ENCODE measurements at regions of chr13 and their contacts with region 1.

Region 1: DNA sequence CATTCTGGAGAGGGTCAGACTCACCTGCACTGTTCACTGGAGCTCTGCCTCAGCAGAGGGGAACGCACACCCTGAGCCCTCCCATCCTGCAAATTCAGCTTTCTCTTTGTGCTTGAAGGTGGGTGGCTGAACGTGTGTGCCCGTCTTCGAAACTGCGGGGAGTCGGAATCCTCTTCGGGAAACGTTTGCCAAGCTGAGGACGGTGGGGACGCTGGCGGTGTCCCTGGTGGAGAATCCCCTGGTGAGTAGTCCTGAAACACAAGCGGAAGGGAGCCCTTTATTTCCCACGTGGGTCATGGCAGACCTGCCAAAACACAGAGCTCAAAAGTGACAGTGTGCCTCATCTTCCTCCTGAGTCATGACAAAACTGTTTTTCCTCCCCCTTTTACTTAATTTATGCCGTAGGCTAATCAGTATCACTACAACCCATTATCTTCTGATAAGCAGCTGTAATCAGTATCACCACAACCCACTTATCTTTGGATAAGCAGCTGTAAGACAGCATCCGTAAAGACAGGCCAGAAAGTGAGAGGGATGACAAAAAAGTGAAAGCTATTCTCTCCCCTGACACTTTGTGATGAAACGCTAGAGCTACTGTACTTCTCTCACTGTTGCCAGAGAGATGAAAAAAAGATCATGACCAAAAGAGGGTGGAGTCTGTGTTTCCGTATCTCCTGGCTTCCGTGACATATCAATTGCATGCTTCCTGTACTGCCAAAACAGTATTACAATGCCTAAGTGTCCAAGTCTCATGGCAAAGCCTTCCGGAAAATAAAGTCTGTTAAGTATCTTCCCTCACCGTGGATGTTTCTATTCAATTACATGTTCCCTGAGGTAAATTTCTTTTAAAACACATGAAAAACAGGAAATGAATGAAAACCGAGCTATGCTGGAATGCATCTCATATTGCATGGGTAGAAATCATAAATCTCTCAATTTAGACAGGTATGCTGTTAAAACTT is 155.5 kb downstream of the TBC1D4 start:
- DNase-seq: peak; percentile 53
- H3K4me3 Mint-ChIP-seq: peak overlapping the region; percentile 83
- H3K27ac Mint-ChIP-seq: peak overlapping the region; percentile 87
- H3K4me1 Mint-ChIP-seq: peaks cover 40% of the 10 kb centered on the region
- H3K27me3 Mint-ChIP-seq: peaks cover 11% of the 10 kb centered on the region

Region 2: DNA sequence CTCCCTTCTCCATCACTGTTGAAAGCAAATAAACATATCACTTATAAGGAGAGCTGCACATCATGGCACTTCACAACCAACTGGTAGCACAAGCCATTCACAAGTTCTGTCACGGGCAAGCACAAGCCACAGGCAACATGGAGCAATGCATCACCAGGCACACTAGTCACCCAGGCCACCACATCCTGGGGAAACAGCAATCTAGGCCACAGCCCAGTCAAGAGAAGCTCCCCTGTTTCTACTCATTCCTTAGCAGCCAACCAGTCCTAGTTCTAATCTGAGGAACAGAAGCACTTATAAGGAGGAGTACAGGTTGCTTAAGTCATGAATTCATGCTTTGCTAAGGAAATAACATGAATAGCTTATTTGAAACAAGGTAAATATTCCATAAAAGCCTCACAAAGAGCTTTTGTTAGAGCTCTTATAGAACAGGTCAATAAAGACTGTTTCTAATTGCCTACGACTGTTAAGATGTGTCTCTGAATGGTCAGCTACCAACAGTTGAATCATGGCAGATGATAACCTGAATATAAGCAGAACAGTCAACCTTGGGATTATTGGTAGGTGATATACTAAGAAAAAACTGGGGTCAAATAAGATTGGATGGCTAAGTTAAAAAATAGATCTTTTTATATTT is 13.5 kb before region 1 on chr13:
- CTCF ChIA-PET with region 1: interaction called, 8 read pairs
- POLR2A ChIA-PET with region 1: interaction called, 39 read pairs
- DNase-seq: peak; percentile 72
- H3K4me3 Mint-ChIP-seq: no peak overlapping the region
- H3K27ac Mint-ChIP-seq: peak overlapping the region; percentile 44
- H3K4me1 Mint-ChIP-seq: peaks cover 30% of the 10 kb centered on the region
- H3K27me3 Mint-ChIP-seq: no peaks in the 10 kb centered on the region

Region 3: DNA sequence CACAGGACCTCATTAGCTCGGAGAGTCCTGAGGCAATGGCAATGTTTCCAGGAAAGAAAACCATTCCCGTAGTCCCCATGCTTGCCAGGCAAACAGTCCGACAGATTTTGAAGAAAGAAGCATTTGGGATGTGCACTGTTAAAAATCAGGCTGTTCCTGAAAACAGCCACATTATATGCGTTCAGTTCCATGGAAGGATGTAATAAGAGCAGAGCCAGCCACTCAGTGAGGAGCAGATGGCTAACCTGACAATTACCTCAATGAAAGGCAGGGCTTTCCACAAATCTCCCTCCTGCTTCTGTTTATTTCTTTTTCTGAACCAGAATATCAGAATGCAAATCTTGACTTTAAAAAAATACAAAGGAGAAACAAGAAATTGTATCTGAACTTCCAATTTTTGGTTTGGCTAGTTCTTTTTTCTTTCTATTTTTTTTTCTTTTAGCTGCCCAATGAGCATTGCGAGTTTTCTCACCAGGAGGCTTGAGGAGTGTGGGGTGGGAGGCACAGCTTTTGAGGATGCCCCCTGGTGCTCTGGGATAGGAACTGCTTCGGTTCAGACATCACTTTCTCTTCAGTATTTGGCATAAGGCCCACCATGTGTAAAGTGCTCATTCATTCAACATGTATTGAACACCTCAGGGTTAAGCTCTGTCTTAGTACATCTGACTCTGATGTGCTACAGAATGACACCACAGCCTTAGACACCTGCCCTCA is 31.3 kb after region 1 on chr13:
- CTCF ChIA-PET with region 1: interaction called, 10 read pairs
- POLR2A ChIA-PET with region 1: interaction called, 3 read pairs
- DNase-seq: peak; percentile 45
- H3K4me3 Mint-ChIP-seq: no peak overlapping the region
- H3K27ac Mint-ChIP-seq: no peak overlapping the region
- H3K4me1 Mint-ChIP-seq: peaks cover 6% of the 10 kb centered on the region
- H3K27me3 Mint-ChIP-seq: no peaks in the 10 kb centered on the region

Region 4: GRCh38 chr13:75365724-75366173 is 39.3 kb after region 1 on chr13:
- CTCF ChIA-PET with region 1: interaction called, 22 read pairs
- POLR2A ChIA-PET with region 1: interaction called, 7 read pairs
- DNase-seq: peak; percentile 31
- H3K4me3 Mint-ChIP-seq: peak overlapping the region; percentile 62
- H3K27ac Mint-ChIP-seq: peak overlapping the region; percentile 90
- H3K4me1 Mint-ChIP-seq: peaks cover 26% of the 10 kb centered on the region
- H3K27me3 Mint-ChIP-seq: peaks cover 2% of the 10 kb centered on the region

Measured in activated CD4-positive, alpha-beta memory T cell treated with anti-CD3 and anti-CD28 coated beads, Interleukin-2, amount 10 ng/mL, durations not matched to agents 7 days and 5 days (primary cell).